ENCODE measurements at regions of chr4 and their contacts with region 1.

Region 1: DNA sequence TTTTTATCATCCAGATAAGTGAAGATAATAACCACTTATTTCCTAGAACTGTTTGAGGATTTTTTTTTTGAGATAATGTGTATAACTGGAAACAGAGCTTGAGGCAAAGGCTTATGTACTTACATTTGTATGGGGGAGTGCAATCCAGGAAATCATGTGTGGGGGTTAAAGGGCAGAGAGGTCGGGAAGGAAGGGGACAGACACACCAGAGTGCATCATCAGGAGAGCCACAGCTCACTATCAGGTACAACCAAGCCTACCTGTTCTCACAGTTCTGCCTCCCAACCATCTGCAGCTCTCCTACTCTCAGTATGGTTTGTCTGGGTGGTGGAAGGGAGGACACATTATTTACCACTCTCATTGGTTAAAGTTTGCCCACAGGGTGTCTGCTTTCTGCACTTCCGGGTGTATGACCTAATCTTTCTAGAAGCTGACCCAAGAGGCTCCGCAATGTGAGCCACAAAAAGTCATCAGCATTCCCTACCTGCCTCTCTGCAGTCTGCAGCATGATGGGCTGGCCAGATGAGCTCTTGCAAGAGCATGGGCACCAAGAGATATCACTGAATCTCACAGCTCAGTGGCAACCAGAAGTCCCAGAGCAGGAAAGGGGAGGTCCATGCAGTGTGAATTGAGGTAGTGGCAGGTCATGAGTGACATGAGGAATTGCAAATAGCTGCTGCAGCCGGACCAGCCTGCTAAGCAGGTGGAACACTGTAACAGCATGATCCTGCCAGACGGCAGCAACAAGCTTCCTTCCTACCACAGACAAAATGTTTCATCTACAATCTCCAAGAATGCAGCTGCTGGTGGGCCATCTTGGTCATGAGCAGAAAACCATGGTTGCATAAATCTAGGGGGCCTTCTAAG is 36.9 kb upstream of the SPRY1 start:
- DNase-seq: no peak
- H3K4me3 ChIP-seq: no peak overlapping the region
- H3K27ac ChIP-seq: no peak overlapping the region
- H3K4me1 ChIP-seq: no peaks in the 10 kb centered on the region
- H3K27me3 ChIP-seq: no peaks in the 10 kb centered on the region
- CTCF ChIP-seq: no peak
- POLR2A ChIP-seq: no peak

Region 2: GRCh38 chr4:123390846-123391456 is 31.3 kb after region 1 on chr4:
- intact Hi-C with region 1: loop called (anchors 1 kb)
- DNase-seq: no peak
- H3K4me3 ChIP-seq: no peak overlapping the region
- H3K27ac ChIP-seq: no peak overlapping the region
- H3K4me1 ChIP-seq: no peaks in the 10 kb centered on the region
- H3K27me3 ChIP-seq: no peaks in the 10 kb centered on the region
- CTCF ChIP-seq: peak; percentile 7 to 36 (median 20)
- POLR2A ChIP-seq: no peak

Region 3: DNA sequence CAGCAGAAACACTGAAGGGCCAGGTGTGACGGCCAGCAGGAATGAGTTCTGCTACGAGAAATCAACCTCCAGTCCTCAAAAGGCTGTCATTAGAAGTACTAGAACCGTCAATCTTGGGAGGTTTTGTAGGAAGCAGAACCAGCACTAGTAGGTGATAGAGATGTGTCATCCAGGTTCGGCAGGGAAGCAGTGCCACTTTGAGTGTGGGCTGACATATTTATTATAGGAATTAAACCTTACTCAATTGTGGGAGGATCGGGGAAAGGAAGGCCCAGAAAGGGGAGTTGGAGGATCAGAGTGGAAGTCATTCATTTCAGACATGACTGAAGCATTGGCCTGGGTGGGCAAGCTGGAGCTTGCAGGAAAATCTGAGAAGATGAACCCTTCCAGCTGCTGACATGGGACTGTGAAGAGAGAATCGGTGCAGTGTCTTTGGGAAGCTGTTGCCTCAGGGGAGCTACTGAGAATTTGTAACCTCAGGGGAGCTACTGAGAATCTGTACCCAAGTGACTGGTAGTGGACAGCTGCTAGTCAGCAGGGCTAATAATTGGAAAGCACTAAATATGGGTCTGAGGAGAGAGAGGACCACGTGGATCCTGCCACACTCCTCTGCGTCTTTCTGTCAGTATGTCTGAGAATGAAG is 214.3 kb after region 1 on chr4:
- intact Hi-C with region 1: no loop called
- DNase-seq: no peak
- H3K4me3 ChIP-seq: no peak overlapping the region
- H3K27ac ChIP-seq: no peak overlapping the region
- H3K4me1 ChIP-seq: no peaks in the 10 kb centered on the region
- H3K27me3 ChIP-seq: no peaks in the 10 kb centered on the region
- CTCF ChIP-seq: no peak
- POLR2A ChIP-seq: no peak

Measured in breast epithelium (tissue), 4 donors.